ENCODE measurements at regions of chr17 and their contacts with region 1.

Region 1: GRCh38 chr17:49031965-49032928 is 35.1 kb downstream of the IGF2BP1 start:
- DNase-seq: peak; percentile 62
- ATAC-seq: peak; percentile 92
- H3K4me3 Mint-ChIP-seq: no peak overlapping the region
- H3K27ac Mint-ChIP-seq: no peak overlapping the region
- H3K4me1 Mint-ChIP-seq: no peaks in the 10 kb centered on the region
- H3K27me3 Mint-ChIP-seq: peaks cover 4% of the 10 kb centered on the region

Region 2: GRCh38 chr17:48671697-48672171 is 360.5 kb before region 1 on chr17:
- CTCF ChIA-PET with region 1: interaction called, 4 read pairs
- POLR2A ChIA-PET with region 1: no interaction called
- intact Hi-C with region 1: loop called (anchors 2 to 10 kb)
- DNase-seq: peak; percentile 81
- ATAC-seq: peak; percentile 47
- H3K4me3 Mint-ChIP-seq: peak overlapping the region; percentile 9
- H3K27ac Mint-ChIP-seq: peak overlapping the region; percentile 26
- H3K4me1 Mint-ChIP-seq: peaks cover 6% of the 10 kb centered on the region
- H3K27me3 Mint-ChIP-seq: peaks cover 27% of the 10 kb centered on the region

Region 3: GRCh38 chr17:48804925-48805411 is 227.3 kb before region 1 on chr17:
- CTCF ChIA-PET with region 1: interaction called, 12 read pairs
- POLR2A ChIA-PET with region 1: no interaction called
- intact Hi-C with region 1: loop called (anchors 1 to 2 kb)
- DNase-seq: peak; percentile 82
- ATAC-seq: peak; percentile 78
- H3K4me3 Mint-ChIP-seq: no peak overlapping the region
- H3K27ac Mint-ChIP-seq: no peak overlapping the region
- H3K4me1 Mint-ChIP-seq: peaks cover 2% of the 10 kb centered on the region
- H3K27me3 Mint-ChIP-seq: peaks cover 9% of the 10 kb centered on the region

Region 4: DNA sequence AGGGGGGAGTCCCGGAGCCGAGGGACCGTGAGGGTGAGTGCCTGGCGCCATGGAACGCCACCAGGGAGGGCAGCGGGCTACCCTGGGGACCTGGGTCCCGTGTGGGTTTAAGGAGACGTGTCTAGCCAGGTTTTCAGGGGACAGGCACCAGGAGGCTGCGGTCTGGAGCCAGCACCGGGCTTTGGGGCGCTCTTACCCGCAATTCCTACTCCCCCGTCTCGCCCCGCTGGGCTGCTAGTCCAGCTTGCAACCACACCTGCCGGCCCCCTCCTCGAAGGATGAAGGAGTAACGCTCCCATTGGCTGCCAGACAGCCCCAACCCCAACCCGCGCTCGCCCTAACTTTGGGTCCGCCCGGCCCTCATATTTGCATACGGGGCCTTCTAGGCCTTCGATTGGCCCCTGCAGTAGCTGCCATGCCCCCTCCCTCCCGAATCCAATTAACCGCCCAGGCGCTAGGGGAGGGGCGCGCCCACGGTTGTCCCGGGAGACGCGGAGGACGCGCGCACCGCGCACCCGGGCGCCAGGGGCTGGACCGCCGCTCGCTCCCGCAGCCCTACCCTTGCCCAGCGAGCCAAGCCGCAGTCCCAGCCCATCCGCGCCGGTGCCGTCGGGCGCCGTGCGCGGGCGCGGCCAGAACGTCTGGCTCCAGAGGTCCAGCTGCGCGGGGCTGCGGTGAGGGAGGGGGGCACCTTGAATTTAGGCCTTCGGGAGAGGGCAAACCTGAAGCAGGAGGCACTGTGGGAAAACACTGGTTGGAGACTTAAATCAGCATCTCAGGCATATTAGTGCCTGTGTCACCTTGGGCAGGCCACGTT is 215.3 kb before region 1 on chr17 and contains the start of gene TTLL6:
- CTCF ChIA-PET with region 1: interaction called, 8 read pairs
- POLR2A ChIA-PET with region 1: no interaction called
- intact Hi-C with region 1: loop called in 1 of 2 experiments (anchors 2 kb)
- DNase-seq: peak; percentile 80
- ATAC-seq: peak; percentile 93
- H3K4me3 Mint-ChIP-seq: peak within 1 kb of the TSS; percentile 63
- H3K27ac Mint-ChIP-seq: no peak within 1 kb of the TSS
- H3K4me1 Mint-ChIP-seq: peaks cover 15% of the 10 kb centered on the region
- H3K27me3 Mint-ChIP-seq: peaks cover 35% of the 10 kb centered on the region
- total RNA-seq, gene TTLL6: not detected

Region 5: DNA sequence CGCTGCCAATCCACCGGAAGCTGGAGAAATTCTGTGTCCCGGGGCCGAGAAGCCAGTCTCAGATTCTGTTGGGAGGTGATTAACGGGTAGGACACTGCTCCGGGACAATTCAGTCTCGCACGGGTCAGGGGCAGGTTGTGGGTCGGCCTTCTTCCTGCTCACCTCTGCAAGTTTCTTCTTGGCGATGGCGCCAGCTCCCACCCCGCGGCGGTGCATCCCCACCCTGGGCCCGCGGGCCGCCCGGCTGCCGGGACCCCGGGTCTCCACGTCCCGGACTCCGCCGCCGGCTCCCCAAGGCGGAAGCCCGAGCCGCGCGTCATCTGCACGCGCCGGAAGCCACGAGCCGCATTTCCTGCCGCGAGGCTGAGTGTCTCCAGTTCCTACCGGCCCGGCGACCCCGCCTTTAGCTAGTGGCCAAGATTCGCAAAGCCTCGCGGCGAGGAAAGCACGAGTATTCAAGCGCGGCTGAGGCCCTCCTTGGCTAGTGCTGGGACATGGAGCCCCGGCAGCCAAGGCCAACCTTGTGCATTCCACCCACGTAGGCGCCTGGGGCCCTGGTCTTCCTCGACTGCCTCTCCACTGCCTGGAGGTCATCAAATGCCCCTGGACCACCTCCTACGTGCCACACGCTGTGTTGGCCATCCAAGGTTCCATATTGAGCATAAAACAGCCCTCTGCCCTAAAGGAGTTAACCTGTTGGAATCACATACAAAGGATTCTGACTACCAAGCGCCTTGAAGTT is 87.6 kb before region 1 on chr17 and contains the start of gene SNF8:
- CTCF ChIA-PET with region 1: interaction called, 6 read pairs
- POLR2A ChIA-PET with region 1: interaction called, 4 read pairs
- intact Hi-C with region 1: loop called in 1 of 2 experiments (anchors 1 kb)
- DNase-seq: peak; percentile 96
- ATAC-seq: peak; percentile 95
- H3K4me3 Mint-ChIP-seq: peak within 1 kb of the TSS; percentile 92
- H3K27ac Mint-ChIP-seq: peak within 1 kb of the TSS; percentile 96
- H3K4me1 Mint-ChIP-seq: peaks cover 8% of the 10 kb centered on the region
- H3K27me3 Mint-ChIP-seq: no peaks in the 10 kb centered on the region
- total RNA-seq, gene SNF8: 59.5 to 94.0 TPM

Region 6: DNA sequence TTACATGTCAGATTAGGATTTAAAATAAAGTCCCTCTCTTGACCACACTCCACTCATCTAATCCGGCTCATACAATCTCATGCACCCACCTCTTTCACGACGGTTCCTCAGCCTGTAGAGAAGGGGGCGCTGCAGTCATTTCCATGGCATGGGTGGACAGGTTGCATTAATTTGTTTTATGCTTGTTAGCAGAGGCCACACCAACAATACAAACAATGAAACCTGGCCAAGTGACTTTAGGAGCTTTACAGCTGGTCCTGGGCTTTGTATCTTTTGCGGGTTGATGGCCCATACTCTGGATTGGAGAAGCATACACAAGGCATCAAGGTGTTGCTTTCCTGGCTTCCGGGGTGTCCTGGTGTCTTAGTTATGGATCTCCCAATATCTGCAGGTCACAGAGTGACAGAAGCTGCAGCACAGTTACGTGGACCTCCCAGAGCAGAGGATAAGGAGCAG is 77.9 kb before region 1 on chr17:
- CTCF ChIA-PET with region 1: no interaction called
- POLR2A ChIA-PET with region 1: no interaction called
- intact Hi-C with region 1: loop called (anchors 2 to 10 kb)
- DNase-seq: peak; percentile 40
- ATAC-seq: no peak
- H3K4me3 Mint-ChIP-seq: no peak overlapping the region
- H3K27ac Mint-ChIP-seq: no peak overlapping the region
- H3K4me1 Mint-ChIP-seq: peaks cover 3% of the 10 kb centered on the region
- H3K27me3 Mint-ChIP-seq: peaks cover 6% of the 10 kb centered on the region

Region 7: GRCh38 chr17:49018748-49019147 is 13.5 kb before region 1 on chr17:
- CTCF ChIA-PET with region 1: interaction called, 12 read pairs
- POLR2A ChIA-PET with region 1: no interaction called
- intact Hi-C with region 1: no loop called
- DNase-seq: no peak
- ATAC-seq: no peak
- H3K4me3 Mint-ChIP-seq: no peak overlapping the region
- H3K27ac Mint-ChIP-seq: no peak overlapping the region
- H3K4me1 Mint-ChIP-seq: no peaks in the 10 kb centered on the region
- H3K27me3 Mint-ChIP-seq: peaks cover 20% of the 10 kb centered on the region